WTC11 (cell line): ENCODE measurements at regions of chr20 and their contacts with region 1.

Region 1: DNA sequence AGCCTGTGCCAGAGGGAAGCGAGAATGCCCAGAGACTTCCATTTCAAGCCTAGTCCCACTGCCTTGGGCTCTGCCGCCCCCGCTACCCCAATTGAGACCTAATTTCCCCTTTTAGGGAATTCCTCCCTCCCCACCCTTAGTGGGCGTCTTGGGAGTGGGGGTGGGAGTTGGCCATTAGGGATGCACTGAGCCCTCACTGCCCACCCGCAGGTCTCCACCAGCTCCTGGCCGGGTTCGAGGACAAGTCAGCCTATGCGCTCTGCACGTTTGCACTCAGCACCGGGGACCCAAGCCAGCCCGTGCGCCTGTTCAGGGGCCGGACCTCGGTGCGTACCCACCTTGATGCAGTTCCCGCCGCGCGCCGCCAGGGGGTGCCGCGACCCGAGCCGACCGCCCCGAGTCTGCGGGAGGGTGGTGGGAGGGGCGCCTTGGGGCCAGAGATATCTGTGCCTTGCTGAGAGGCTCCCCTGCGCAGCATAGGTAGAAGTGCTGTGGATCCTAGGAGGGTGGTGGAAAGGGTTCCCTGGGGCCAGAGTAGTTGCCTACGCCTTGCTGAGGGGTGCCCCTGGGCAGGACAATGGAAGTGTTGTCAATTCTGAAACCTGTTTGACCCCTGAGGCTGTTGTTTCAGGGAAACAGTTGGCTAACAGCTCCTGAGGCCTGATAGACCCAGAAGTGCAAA is 9.2 kb downstream of the ITPA start:
- DNase-seq: peak; percentile 91
- ATAC-seq: peak; percentile 94
- H3K4me3 Mint-ChIP-seq: no peak overlapping the region
- H3K27ac Mint-ChIP-seq: no peak overlapping the region
- H3K4me1 Mint-ChIP-seq: no peaks in the 10 kb centered on the region
- H3K27me3 Mint-ChIP-seq: no peaks in the 10 kb centered on the region
- CTCF ChIP-seq: peak; percentile 99

Region 2: DNA sequence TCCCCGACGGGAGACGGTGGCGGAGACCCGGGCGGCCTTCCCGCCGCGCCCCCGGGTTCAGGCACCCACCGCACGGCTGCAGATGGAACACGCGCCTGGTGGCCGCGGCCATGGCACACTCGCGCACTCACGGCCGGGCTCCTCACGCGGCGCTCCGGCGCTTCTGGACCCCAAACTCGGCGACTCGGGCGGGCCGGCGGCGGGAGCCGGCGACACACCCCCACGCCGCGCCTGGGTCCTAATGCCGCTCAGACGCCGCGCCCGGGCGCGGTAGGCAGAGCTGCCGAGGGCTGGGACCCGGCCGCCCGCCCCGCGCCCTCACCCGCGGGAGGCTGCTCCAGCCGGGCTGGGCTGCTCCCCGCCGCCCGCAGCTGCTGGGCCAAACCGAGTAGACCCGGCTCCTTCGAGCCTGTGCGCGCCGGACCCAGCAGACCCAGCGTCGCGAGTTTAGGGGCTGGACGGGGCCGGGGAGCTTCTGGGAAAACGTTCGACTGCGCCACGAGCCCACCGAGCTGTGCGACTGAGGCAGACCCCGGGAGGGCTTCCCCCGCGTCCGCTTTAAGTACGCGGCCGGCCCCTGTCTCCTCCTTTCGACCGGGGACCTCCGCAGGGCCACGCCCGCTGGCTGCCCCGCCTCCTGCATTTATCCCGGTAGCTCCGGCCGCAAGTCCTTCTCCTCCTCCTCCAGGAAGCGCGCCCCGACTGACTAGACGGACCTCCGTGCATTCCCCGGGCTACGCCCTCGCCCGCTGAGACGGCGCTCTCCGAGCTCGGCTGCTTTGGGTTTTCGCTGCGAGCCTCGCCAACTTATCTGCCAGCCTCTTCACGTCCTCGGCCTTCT is 20.8 kb after region 1 on chr20 and contains the start of gene SLC4A11:
- CTCF ChIA-PET with region 1: interaction called, 27 read pairs
- POLR2A ChIA-PET with region 1: interaction called, 6 read pairs
- DNase-seq: peak; percentile 82
- ATAC-seq: peak; percentile 63
- H3K4me3 Mint-ChIP-seq: peak within 1 kb of the TSS; percentile 95
- H3K27ac Mint-ChIP-seq: no peak within 1 kb of the TSS; the same call in 1 of the 2 replicates
- H3K4me1 Mint-ChIP-seq: peaks cover 26% of the 10 kb centered on the region
- H3K27me3 Mint-ChIP-seq: peaks cover 56% of the 10 kb centered on the region
- CTCF ChIP-seq: no peak
- total RNA-seq, gene SLC4A11: 30.4 to 39.5 TPM (median 34.5 TPM) in 3 replicates

Region 3: DNA sequence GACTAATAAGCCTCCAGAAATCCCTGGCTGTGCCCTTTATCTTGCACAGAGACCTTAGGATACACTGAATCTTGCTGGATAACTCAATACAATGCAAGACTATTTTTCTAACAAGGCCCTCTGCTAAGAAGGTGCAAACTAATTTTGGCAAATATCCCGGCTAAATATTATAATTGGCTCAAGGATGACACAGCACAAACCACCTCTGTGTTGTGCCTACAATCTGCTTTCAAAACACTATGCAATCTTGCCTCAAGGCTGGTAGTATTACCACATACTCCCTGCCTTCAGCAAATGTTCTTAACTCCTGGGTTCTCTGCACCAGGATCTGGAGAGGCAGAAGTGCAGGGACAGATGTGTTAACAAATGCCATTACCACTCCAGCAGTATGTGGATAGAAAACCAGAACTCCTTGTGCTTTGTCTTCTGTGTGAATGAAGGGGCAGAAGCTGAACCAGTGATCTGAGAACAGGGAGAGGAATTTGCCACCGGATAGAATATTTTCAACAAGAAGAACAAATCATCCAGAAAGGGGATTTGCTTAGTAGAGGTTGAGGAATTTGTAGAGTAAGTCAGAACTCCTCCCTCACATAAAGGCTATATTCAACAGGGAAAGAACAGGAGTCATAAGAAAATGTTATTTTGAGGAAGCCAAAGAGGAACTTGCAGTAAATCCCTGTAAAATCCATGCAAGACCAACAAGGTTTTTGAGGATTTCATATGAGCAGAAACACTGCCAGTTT is 94.7 kb after region 1 on chr20:
- CTCF ChIA-PET with region 1: interaction called, 24 read pairs
- POLR2A ChIA-PET with region 1: interaction called, 3 read pairs
- DNase-seq: no peak
- ATAC-seq: no peak
- H3K4me3 Mint-ChIP-seq: no peak overlapping the region
- H3K27ac Mint-ChIP-seq: no peak overlapping the region
- H3K4me1 Mint-ChIP-seq: no peaks in the 10 kb centered on the region
- H3K27me3 Mint-ChIP-seq: no peaks in the 10 kb centered on the region
- CTCF ChIP-seq: no peak

Region 4: DNA sequence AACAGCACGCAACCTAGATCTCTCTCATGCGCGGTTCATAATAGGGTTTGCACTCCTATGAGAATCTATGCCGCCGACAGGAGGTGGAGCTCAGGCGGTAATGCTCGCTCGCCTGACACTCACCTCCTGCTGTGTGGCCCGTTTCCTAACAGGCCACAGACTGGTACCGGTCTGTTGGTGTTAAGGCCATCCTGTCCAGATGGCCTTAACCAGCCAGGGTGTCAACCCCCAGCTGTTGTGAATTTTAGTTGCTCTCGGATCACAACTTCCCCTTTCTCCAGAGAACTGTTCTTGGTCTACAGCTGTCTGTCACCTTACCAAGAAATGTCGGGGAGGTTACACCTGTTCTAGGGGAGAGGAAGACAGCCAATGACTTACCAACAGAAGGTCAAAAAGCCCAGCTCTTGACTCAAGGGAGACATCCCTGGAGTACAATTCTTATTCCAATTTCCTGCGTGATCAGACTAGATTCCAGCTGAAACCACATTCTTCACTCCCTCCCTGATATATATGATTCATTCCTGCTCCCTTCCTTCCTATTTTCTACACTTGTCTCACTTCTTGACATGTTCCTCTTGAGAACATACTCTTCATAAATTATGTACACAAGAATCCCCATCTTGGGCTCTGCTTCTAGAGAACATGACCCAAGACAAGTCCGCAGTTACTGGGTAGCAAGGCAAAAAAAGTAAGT is 212.1 kb after region 1 on chr20:
- CTCF ChIA-PET with region 1: no interaction called
- POLR2A ChIA-PET with region 1: no interaction called
- DNase-seq: no peak
- ATAC-seq: no peak
- H3K4me3 Mint-ChIP-seq: no peak overlapping the region
- H3K27ac Mint-ChIP-seq: no peak overlapping the region
- H3K4me1 Mint-ChIP-seq: peaks cover 3% of the 10 kb centered on the region
- H3K27me3 Mint-ChIP-seq: no peaks in the 10 kb centered on the region
- CTCF ChIP-seq: no peak